Posterior vena cava (tissue), 2 donors: ENCODE measurements at regions of chr11 and their contacts with region 1.

Region 1: GRCh38 chr11:2399488-2400068 is 972 bp upstream of the TSSC4 start:
- DNase-seq: peak; percentile 89

Region 2: GRCh38 chr11:1559119-1559951 is 840.2 kb before region 1 on chr11:
- intact Hi-C with region 1: loop called in 1 of 2 experiments (anchors 10 kb)
- DNase-seq: peak; percentile 95

Region 3: GRCh38 chr11:2222451-2222850 is 177.1 kb before region 1 on chr11:
- intact Hi-C with region 1: no loop called
- DNase-seq: no peak